CD4-positive, alpha-beta memory T cell (primary cell): ENCODE measurements at regions of chr19 and their contacts with region 1.

Region 1: GRCh38 chr19:10189616-10190015 is 5.1 kb downstream of the DNMT1 start:
- DNase-seq: no peak
- H3K4me3 ChIP-seq: no peak overlapping the region
- H3K4me3 Mint-ChIP-seq: peak overlapping the region in 1 of 8 donors; percentile 26
- H3K27ac ChIP-seq: no peak overlapping the region
- H3K27ac Mint-ChIP-seq: peak overlapping the region in 6 of 7 donors; percentile 1 to 76 (median 48)
- H3K4me1 ChIP-seq: peaks cover 50% of the 10 kb centered on the region
- H3K4me1 Mint-ChIP-seq: peaks cover 27 to 61% (median 39%) of the 10 kb centered on the region in 4 donors
- H3K27me3 ChIP-seq: no peaks in the 10 kb centered on the region
- H3K27me3 Mint-ChIP-seq: no peaks in the 10 kb centered on the region

Region 2: DNA sequence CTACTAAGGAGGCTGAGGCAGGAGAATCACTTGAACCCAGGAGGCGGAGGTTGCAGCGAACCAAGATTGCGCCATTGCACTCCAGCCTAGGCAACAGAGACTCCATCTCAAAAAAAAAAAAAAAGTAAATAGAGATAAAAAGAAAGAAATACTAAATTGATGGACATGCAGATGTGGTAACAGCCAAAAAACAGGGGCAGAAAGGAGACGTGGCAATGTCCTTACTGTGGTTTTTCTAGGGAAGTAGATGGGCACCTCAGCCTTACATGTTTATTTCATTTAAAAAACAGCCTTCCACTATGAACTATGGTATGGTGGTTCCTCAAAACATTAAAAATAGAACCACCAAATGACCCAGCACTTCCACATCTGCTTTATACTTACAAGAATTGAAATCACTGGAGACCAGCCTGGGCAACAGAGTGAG is 63.4 kb before region 1 on chr19:
- CTCF ChIA-PET with region 1: interaction called, 4 read pairs
- POLR2A ChIA-PET with region 1: no interaction called
- intact Hi-C with region 1: loop called (anchors 5 kb)
- DNase-seq: no peak
- H3K4me3 ChIP-seq: no peak overlapping the region
- H3K4me3 Mint-ChIP-seq: no peak overlapping the region
- H3K27ac ChIP-seq: no peak overlapping the region
- H3K27ac Mint-ChIP-seq: no peak overlapping the region
- H3K4me1 ChIP-seq: no peaks in the 10 kb centered on the region
- H3K4me1 Mint-ChIP-seq: no peaks in the 10 kb centered on the region
- H3K27me3 ChIP-seq: no peaks in the 10 kb centered on the region
- H3K27me3 Mint-ChIP-seq: no peaks in the 10 kb centered on the region